ENCODE measurements at regions of chr10 and their contacts with region 1.

Region 1: DNA sequence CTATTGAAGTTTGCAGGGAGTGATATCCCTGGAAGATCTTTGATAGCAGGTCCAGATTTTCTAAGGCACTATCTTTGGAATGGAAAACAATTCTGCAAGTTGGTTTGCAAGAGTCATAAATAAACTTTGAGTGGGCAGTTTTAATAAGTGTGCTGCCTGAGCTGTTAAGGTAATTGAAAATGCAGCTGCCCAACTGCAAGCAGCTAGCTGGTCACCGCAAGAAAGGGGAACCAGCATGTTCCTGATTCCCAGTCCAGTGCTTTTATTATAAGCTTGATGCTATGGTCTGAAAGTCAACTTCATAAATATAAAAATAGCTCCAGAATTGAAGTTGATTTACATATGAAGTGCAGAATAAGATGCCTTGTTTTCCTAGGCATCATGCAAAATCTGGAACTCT is 308.4 kb downstream of the ZNF248 start:
- DNase-seq: no peak
- ATAC-seq: no peak
- H3K4me3 ChIP-seq: no peak overlapping the region
- H3K27ac ChIP-seq: no peak overlapping the region
- H3K4me1 ChIP-seq: peaks cover 0 to 22% (median 0%) of the 10 kb centered on the region in 9 donors
- H3K27me3 ChIP-seq: peaks cover 0 to 3% (median 0%) of the 10 kb centered on the region in 7 donors
- CTCF ChIP-seq: no peak

Region 2: GRCh38 chr10:37478392-37478791 is 70.7 kb before region 1 on chr10:
- intact Hi-C with region 1: no loop called
- DNase-seq: no peak
- ATAC-seq: peak in 1 of 8 donors; percentile 44
- H3K4me3 ChIP-seq: no peak overlapping the region
- H3K27ac ChIP-seq: no peak overlapping the region
- H3K4me1 ChIP-seq: no peaks in the 10 kb centered on the region
- H3K27me3 ChIP-seq: no peaks in the 10 kb centered on the region
- CTCF ChIP-seq: no peak

Region 3: DNA sequence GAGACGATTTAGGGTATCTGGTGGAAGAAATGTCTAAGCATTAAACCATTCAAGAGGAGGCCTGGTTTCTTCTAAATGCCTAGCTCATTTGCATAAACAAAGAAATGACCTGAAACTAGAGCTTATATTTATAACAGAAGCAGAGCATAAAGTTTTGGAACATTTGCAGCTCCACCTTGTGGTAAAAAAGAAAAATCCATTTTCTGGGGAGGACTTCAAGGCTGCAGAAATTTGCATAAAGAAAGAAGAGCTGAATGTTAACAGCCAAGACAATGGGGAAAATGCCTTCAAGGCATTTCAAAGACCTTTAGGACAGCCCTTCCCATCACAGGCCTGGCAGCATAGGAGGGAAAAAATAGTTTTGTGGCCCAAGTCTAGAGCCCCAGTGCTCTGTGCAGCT is 53.6 kb before region 1 on chr10:
- intact Hi-C with region 1: loop called in 1 of 10 experiments (anchors 5 kb)
- DNase-seq: no peak
- ATAC-seq: no peak
- H3K4me3 ChIP-seq: no peak overlapping the region
- H3K27ac ChIP-seq: no peak overlapping the region
- H3K4me1 ChIP-seq: no peaks in the 10 kb centered on the region
- H3K27me3 ChIP-seq: no peaks in the 10 kb centered on the region
- CTCF ChIP-seq: peak in 7 of 9 donors; percentile 33 to 50 (median 41)

Region 4: DNA sequence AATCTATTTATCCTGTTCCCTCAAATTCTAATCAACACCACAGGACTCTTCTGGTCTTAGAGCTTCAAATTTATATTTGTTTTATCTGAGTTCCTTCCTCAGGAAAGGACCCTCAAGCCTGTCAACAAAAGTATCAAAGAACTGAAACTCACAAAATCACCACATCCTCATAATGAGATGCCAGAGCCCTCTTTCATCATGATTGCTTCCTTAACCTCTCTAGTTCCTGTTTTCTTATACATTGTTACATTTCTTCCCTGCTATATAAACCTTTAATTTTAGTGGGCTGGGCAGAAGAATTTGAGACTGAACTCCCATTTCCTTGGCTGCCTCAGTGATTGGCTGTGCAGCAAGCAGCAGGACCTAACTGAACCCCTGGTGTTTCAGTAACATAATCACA is 118.7 kb after region 1 on chr10:
- intact Hi-C with region 1: no loop called
- DNase-seq: no peak
- ATAC-seq: no peak
- H3K4me3 ChIP-seq: no peak overlapping the region
- H3K27ac ChIP-seq: no peak overlapping the region
- H3K4me1 ChIP-seq: no peaks in the 10 kb centered on the region
- H3K27me3 ChIP-seq: no peaks in the 10 kb centered on the region
- CTCF ChIP-seq: no peak